Activated CD4-positive, alpha-beta memory T cell treated with anti-CD3 and anti-CD28 coated beads for 36 hours (primary cell): ENCODE measurements at regions of chr11 and their contacts with region 1.

Region 1: DNA sequence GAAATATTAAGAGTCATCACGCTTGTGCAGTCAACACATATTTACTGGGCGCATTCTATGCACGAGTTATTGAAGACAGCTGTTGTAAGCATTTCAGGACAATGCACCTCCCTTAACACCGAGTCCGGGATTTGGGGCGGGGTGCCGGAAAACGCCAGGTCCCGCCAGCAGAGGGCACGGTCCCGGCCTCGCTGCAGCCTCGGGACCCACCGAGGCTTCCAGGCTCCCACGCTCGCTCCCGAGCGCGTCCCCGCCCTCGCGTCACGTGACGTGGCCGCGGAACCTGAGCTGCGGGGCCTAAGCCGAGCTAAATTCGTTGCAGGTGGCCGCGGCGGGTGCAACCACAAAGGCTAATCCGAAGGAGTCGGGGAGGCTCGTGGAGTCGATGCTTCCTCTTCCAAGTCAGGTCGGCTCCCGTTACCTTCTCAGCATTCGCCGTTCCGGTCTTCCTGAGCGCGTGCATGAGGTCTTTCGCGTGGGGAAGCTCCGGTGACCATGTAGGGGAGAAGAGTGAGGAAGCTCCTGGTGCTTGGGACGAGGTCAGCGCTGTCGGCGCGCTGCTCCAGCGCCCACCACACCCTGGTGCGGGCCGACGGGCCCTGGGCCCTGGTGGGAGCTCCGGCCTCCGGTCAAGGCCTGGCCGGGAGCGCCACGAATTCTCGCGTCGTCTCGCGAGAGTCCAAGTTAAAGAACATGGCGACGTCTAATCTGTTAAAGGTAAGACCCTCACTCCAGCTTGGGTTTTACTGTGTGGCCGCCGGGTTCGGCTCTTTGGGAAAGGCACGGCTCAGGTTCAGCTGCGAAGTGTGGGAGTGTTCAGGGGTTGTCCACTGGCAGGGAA is at the start of gene CUL5:
- DNase-seq: peak; percentile 94
- H3K4me3 Mint-ChIP-seq: peak within 1 kb of the TSS; percentile 93
- H3K27ac Mint-ChIP-seq: peak within 1 kb of the TSS; percentile 93
- H3K4me1 Mint-ChIP-seq: peaks cover 17% of the 10 kb centered on the region
- H3K27me3 Mint-ChIP-seq: no peaks in the 10 kb centered on the region
- total RNA-seq, gene CUL5: 27.7 to 30.7 TPM

Region 2: DNA sequence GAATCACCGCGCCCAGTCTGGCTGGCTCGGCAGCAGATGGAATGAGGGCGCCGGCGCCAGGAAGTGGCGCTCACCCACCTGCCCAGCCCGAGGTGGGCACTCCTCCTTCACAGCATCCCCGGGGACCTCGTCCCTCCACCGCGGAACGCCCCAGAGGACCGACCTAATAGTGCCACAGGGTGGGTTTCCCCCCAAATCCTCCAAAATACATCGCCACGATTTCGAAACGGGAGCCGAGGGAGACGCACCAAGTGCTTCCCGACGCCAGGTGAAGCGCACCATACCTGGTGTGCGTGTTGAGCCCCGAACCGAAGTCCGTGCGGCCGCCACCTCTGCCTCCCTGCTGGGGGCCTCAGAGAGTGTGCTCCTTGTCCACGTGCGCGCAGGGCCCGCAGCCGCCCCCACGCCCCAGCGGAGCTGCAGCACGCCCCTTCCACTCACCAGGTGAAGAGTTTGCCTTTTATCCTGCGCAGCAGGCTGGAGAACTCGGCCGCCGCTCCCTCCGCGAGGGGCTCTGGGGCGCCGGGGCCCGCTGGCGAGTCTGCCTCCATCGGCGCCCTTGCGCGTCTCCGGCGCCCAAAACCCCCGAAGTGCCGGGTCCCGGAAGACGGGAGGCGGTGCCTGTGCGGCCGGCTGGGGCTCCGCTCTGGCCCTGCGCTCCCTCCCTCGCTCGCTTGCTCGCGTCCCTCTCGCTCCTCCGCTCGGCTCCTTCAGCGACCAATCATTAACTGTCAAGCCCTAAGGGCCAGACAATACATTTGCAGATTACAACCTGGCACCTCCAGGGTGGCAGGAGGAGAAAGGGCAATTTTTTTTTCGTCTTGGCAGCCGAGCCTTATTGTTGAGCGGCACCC is 150.4 kb before region 1 on chr11 and contains the start of gene SLC35F2:
- CTCF ChIA-PET with region 1: no interaction called
- POLR2A ChIA-PET with region 1: no interaction called
- intact Hi-C with region 1: loop called (anchors 2 kb)
- DNase-seq: peak; percentile 83
- H3K4me3 Mint-ChIP-seq: peak within 1 kb of the TSS; percentile 95
- H3K27ac Mint-ChIP-seq: peak within 1 kb of the TSS; percentile 92
- H3K4me1 Mint-ChIP-seq: peaks cover 31% of the 10 kb centered on the region
- H3K27me3 Mint-ChIP-seq: no peaks in the 10 kb centered on the region
- total RNA-seq, gene SLC35F2: 22.8 to 24.5 TPM

Region 3: DNA sequence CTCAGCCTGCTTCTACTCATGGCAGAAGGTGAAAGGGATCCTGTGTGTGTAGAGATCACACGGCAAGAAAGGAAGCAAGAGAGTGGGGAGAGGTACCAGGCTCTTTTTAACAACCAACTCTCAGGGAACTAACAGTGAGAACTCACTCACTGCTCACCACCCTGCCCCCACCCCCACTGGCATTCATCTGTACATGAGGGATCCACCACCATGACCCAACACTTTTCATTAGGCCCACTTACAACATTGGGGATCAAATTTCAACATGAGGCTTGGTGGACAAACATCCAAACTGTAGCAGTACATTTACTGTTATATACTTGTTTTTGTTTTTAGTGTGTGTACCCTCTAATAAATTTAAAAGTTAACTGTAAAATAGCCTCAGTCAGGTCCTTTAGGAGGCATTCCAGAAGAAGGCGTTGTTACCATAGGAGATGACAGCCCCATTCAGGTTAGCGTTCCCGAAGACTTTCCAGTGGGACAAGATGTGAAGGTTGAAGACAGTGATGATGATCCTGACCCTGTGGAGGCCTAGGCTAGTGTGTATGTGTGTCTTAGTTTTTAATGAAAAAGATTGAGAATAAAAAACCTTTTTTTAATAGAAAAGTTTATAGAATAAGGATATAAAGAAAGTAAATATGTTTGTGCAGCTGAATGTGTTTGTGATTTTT is 11.1 kb after region 1 on chr11:
- CTCF ChIA-PET with region 1: interaction called, 19 read pairs
- POLR2A ChIA-PET with region 1: no interaction called
- intact Hi-C with region 1: loop called (anchors 2 kb)
- DNase-seq: no peak
- H3K4me3 Mint-ChIP-seq: no peak overlapping the region
- H3K27ac Mint-ChIP-seq: no peak overlapping the region
- H3K4me1 Mint-ChIP-seq: peaks cover 56% of the 10 kb centered on the region
- H3K27me3 Mint-ChIP-seq: no peaks in the 10 kb centered on the region

Region 4: GRCh38 chr11:108069947-108070346 is 61.1 kb after region 1 on chr11:
- CTCF ChIA-PET with region 1: interaction called, 3 read pairs
- POLR2A ChIA-PET with region 1: no interaction called
- intact Hi-C with region 1: loop called (anchors 1 kb)
- DNase-seq: no peak
- H3K4me3 Mint-ChIP-seq: no peak overlapping the region
- H3K27ac Mint-ChIP-seq: no peak overlapping the region
- H3K4me1 Mint-ChIP-seq: peaks cover 13% of the 10 kb centered on the region
- H3K27me3 Mint-ChIP-seq: no peaks in the 10 kb centered on the region

Region 5: GRCh38 chr11:108199446-108200321 is 190.8 kb after region 1 on chr11:
- CTCF ChIA-PET with region 1: no interaction called
- POLR2A ChIA-PET with region 1: no interaction called
- intact Hi-C with region 1: loop called (anchors 5 kb)
- DNase-seq: peak; percentile 91
- H3K4me3 Mint-ChIP-seq: no peak overlapping the region
- H3K27ac Mint-ChIP-seq: peak overlapping the region; percentile 76
- H3K4me1 Mint-ChIP-seq: peaks cover 89% of the 10 kb centered on the region
- H3K27me3 Mint-ChIP-seq: no peaks in the 10 kb centered on the region

Region 6: GRCh38 chr11:108664730-108665525 is 656.1 kb after region 1 on chr11 and contains the start of gene DDX10:
- CTCF ChIA-PET with region 1: interaction called, 15 read pairs
- POLR2A ChIA-PET with region 1: interaction called, 3 read pairs
- intact Hi-C with region 1: loop called (anchors 1 kb)
- DNase-seq: peak; percentile 99
- H3K4me3 Mint-ChIP-seq: peak within 1 kb of the TSS; percentile 100
- H3K27ac Mint-ChIP-seq: peak within 1 kb of the TSS; percentile 80
- H3K4me1 Mint-ChIP-seq: peaks cover 44% of the 10 kb centered on the region
- H3K27me3 Mint-ChIP-seq: no peaks in the 10 kb centered on the region
- total RNA-seq, gene DDX10: 34.8 to 37.7 TPM